ENCODE measurements at regions of chrX and their contacts with region 1.

Region 1: DNA sequence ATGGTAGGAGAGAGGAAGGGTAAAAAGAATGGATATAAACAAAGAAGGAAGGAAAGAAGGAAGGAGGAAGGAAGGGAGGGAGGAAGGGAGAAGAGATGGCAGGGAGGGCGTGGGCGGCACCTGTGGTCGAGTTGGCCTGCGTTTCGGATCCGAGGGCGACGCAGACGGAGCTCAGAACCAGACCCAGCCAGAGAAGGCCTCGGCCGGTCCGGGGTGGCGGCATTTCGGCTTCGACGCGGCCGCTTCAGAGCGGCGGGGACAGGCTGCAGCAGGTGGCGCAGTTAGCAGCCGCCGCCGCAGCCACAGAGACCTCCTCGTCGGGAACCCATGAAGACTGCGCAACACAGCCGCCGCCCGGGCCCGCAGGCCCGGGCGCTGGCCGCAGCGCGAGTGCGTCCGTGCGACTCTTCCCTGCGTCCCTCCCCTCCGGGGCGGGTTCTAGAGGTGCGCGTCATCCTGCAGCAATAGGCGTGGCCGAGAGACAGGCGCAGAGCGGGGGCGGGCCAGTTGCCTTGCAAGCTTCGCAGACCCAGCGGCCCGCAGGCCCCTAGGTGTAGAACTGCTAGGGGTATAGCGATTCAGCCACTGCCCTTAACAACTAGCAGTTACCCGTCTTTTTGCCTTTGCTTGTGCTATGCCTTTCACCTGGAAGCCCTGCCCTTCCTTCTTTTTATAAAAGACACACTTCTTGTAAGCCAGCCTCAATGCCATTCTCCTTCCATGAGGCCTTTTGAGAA is at the start of gene IDS:
- DNase-seq: peak; percentile 83
- H3K4me3 ChIP-seq: peak within 1 kb of the TSS in 2 of 3 experiments; percentile 41 to 63
- H3K27ac ChIP-seq: peak within 1 kb of the TSS; percentile 44
- H3K4me1 ChIP-seq: peaks cover 17% of the 10 kb centered on the region
- H3K27me3 ChIP-seq: peaks cover 0 to 2% of the 10 kb centered on the region in 2 experiments
- CTCF ChIP-seq: no peak
- POLR2A ChIP-seq: peak; percentile 91
- total RNA-seq, gene IDS: 35.2 and 42.2 TPM in 2 replicates

Region 2: GRCh38 chrX:149248073-149248625 is 256.9 kb before region 1 on chrX:
- CTCF ChIA-PET with region 1: no interaction called
- POLR2A ChIA-PET with region 1: no interaction called
- dilution Hi-C with region 1: no loop called
- intact Hi-C with region 1: no loop called
- DNase-seq: peak; percentile 1
- H3K4me3 ChIP-seq: no peak overlapping the region
- H3K27ac ChIP-seq: no peak overlapping the region
- H3K4me1 ChIP-seq: no peaks in the 10 kb centered on the region
- H3K27me3 ChIP-seq: no peaks in the 10 kb centered on the region
- CTCF ChIP-seq: no peak
- POLR2A ChIP-seq: no peak

Region 3: GRCh38 chrX:149518236-149518635 is 13.2 kb after region 1 on chrX:
- CTCF ChIA-PET with region 1: interaction called, 3 read pairs
- POLR2A ChIA-PET with region 1: no interaction called
- dilution Hi-C with region 1: no loop called
- intact Hi-C with region 1: loop called (anchors 2 kb)
- DNase-seq: peak; percentile 70
- H3K4me3 ChIP-seq: no peak overlapping the region
- H3K27ac ChIP-seq: no peak overlapping the region
- H3K4me1 ChIP-seq: peaks cover 18% of the 10 kb centered on the region
- H3K27me3 ChIP-seq: peaks cover 0 to 4% of the 10 kb centered on the region in 2 experiments
- CTCF ChIP-seq: no peak
- POLR2A ChIP-seq: no peak

Region 4: DNA sequence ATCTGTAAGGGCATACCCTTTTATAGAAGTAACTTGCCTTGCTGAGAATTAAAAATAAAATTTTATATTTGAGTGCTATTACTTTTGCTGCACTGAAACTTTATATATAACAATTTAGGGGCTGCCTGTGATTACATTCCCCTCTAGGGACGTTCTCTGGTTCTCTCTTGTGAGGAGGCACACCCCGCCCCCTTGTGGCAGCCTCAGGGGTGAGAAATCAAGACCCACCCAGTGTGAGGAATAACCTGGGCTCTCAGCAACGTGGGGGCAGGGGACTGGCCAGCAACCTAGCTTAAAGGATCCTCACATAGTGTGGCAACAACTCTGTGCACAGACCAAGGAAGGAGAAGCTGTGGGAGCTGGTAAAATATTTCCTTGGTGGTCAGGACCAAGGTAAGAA is 320.3 kb after region 1 on chrX:
- CTCF ChIA-PET with region 1: no interaction called
- POLR2A ChIA-PET with region 1: no interaction called
- dilution Hi-C with region 1: no loop called
- intact Hi-C with region 1: loop called (anchors 2 kb)
- DNase-seq: peak; percentile 1
- H3K4me3 ChIP-seq: no peak overlapping the region
- H3K27ac ChIP-seq: no peak overlapping the region
- H3K4me1 ChIP-seq: no peaks in the 10 kb centered on the region
- H3K27me3 ChIP-seq: no peaks in the 10 kb centered on the region
- CTCF ChIP-seq: peak; percentile 12 to 23
- POLR2A ChIP-seq: no peak

Region 5: GRCh38 chrX:149938427-149939270 is 433.6 kb after region 1 on chrX and contains the start of gene EOLA2:
- CTCF ChIA-PET with region 1: no interaction called
- POLR2A ChIA-PET with region 1: no interaction called
- dilution Hi-C with region 1: no loop called
- intact Hi-C with region 1: loop called (anchors 10 kb)
- DNase-seq: peak; percentile 99
- H3K4me3 ChIP-seq: peak within 1 kb of the TSS; percentile 7 to 71 (median 29)
- H3K27ac ChIP-seq: peak within 1 kb of the TSS; percentile 36
- H3K4me1 ChIP-seq: peaks cover 2% of the 10 kb centered on the region
- H3K27me3 ChIP-seq: no peaks in the 10 kb centered on the region
- CTCF ChIP-seq: peak; percentile 63 to 65
- POLR2A ChIP-seq: peak; percentile 34
- total RNA-seq, gene EOLA2: 24.3 and 35.5 TPM in 2 replicates